Lower leg skin (tissue), 4 donors: ENCODE measurements at regions of chr6 and their contacts with region 1.

Region 1: GRCh38 chr6:20572940-20573339 is 38.7 kb downstream of the CDKAL1 start:
- DNase-seq: peak in 1 of 2 donors; percentile 36
- H3K4me3 ChIP-seq: no peak overlapping the region
- CTCF ChIP-seq: no peak
- POLR2A ChIP-seq: no peak

Region 2: GRCh38 chr6:19976411-19977129 is 596.4 kb before region 1 on chr6:
- intact Hi-C with region 1: no loop called
- DNase-seq: no peak
- H3K4me3 ChIP-seq: no peak overlapping the region
- CTCF ChIP-seq: no peak
- POLR2A ChIP-seq: no peak

Region 3: DNA sequence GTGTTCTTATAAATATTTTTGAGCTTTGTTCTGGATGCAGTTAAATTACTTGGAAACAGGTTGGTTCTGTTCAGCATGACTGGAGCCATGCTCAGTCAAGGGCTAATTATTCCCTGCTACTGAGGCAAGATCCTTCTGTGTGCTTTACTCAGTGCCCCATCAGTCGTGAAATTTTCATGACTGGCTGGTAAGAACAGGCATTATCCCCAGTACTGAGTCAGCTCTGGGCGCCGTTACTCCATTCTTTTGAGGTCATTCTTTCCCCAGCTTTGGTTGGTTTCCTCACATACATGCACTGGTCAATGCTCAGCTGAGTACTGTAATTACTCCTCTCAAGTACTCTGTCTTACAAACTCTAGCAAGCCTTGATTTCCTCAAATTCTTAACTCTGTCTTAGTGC is 32.6 kb after region 1 on chr6:
- intact Hi-C with region 1: no loop called
- DNase-seq: no peak
- H3K4me3 ChIP-seq: no peak overlapping the region
- CTCF ChIP-seq: no peak
- POLR2A ChIP-seq: no peak

Region 4: GRCh38 chr6:21589352-21590345 is 1016.7 kb after region 1 on chr6:
- intact Hi-C with region 1: loop called (anchors 10 kb)
- DNase-seq: peak; percentile 82 to 97
- H3K4me3 ChIP-seq: peak overlapping the region; percentile 29
- CTCF ChIP-seq: peak in 1 of 3 donors; percentile 43
- POLR2A ChIP-seq: no peak